H1 (cell line): ENCODE measurements at regions of chr7 and their contacts with region 1.

Region 1: GRCh38 chr7:130010689-130011412 is 40.3 kb downstream of the ZC3HC1 start:
- DNase-seq: peak; percentile 90 to 98
- H3K4me3 ChIP-seq: no peak overlapping the region
- H3K27ac ChIP-seq: no peak overlapping the region
- H3K4me1 ChIP-seq: no peaks in the 10 kb centered on the region
- H3K27me3 ChIP-seq: no peaks in the 10 kb centered on the region
- CTCF ChIP-seq: peak; percentile 77 to 89 (median 88)
- EP300 ChIP-seq: no peak
- POLR2A ChIP-seq: no peak
- RAD21 ChIP-seq: peak; percentile 97 to 98

Region 2: DNA sequence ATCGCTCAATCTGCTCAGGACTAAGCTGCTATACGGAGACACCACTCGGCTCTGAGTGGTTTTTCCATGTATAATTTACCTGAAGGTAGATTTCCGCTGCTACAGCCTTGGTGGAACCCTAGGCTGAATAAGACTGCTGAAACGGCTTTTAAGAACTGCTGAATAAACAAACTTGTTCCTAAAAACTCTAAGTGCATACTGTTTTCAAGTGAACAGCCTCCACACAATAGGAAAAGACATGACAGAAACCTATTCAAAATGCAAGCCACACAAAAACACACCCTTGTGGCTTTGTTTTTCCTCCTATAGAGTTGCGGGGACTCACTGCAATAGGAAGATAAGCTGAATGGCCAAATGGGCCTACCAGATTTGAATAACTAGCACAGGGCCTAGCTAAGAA is 175.3 kb before region 1 on chr7:
- CTCF ChIA-PET with region 1: interaction called, 141 read pairs
- POLR2A ChIA-PET with region 1: no interaction called
- DNase-seq: no peak
- H3K4me3 ChIP-seq: no peak overlapping the region
- H3K27ac ChIP-seq: no peak overlapping the region
- H3K4me1 ChIP-seq: peaks cover 9 to 35% (median 32%) of the 10 kb centered on the region in 4 experiments
- H3K27me3 ChIP-seq: no peaks in the 10 kb centered on the region
- CTCF ChIP-seq: no peak
- EP300 ChIP-seq: no peak
- POLR2A ChIP-seq: no peak
- RAD21 ChIP-seq: no peak

Region 3: DNA sequence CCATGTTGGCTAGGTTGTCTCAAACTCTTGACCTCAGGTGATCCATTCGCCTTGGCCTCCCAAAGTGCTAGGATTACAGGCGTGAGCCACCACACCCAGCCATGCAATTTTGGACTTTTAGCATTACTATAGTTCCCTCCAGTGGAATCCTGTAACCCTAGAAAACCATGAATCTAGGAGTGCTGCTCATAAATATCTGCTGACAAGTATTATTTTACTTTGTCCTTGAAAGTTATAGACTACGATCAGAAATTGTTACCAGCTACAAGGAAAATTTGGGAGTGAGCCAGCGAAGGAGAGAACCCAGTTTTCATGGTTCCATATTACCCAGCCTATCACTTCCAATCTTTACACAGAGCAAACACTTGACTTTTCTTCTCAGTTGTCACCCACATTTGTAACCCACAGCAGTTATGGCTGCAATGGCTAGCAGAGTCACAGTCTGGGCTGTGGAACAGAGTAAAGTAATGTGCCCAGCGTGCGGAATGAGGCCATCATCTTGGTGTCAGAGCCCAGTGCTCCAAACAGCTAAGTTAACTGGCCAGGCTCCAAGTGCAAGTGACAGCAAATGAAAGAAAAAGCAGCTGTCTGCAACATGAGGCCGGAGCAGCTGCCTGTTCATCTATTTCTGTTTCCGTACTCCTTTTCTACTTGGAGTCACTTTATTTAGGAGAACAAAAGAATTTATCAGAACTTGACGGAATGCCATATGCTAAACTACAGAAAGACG is 10.4 kb after region 1 on chr7:
- CTCF ChIA-PET with region 1: interaction called, 26 read pairs
- POLR2A ChIA-PET with region 1: no interaction called
- DNase-seq: no peak
- H3K4me3 ChIP-seq: no peak overlapping the region
- H3K27ac ChIP-seq: no peak overlapping the region
- H3K4me1 ChIP-seq: no peaks in the 10 kb centered on the region; a peak in 1 of 7 replicates
- H3K27me3 ChIP-seq: no peaks in the 10 kb centered on the region
- CTCF ChIP-seq: no peak
- EP300 ChIP-seq: no peak
- POLR2A ChIP-seq: no peak
- RAD21 ChIP-seq: no peak